CD8-positive, alpha-beta T cell (primary cell): ENCODE measurements at regions of chr12 and their contacts with region 1.

Region 1: GRCh38 chr12:133181238-133181959 is at the start of gene ZNF268:
- DNase-seq: peak; percentile 78 to 93 (median 89)
- ATAC-seq: peak; percentile 92
- H3K4me3 ChIP-seq: peak within 1 kb of the TSS; percentile 73 to 82
- H3K4me3 Mint-ChIP-seq: peak within 1 kb of the TSS; percentile 93
- H3K27ac ChIP-seq: peak within 1 kb of the TSS; percentile 76 to 79
- H3K27ac Mint-ChIP-seq: peak within 1 kb of the TSS; percentile 92
- H3K4me1 ChIP-seq: peaks cover 8% of the 10 kb centered on the region
- H3K4me1 Mint-ChIP-seq: peaks cover 19% of the 10 kb centered on the region
- H3K27me3 ChIP-seq: no peaks in the 10 kb centered on the region
- H3K27me3 Mint-ChIP-seq: no peaks in the 10 kb centered on the region
- CTCF ChIP-seq: peak; percentile 35
- total RNA-seq, gene ZNF268: 23.9 to 24.8 TPM

Region 2: DNA sequence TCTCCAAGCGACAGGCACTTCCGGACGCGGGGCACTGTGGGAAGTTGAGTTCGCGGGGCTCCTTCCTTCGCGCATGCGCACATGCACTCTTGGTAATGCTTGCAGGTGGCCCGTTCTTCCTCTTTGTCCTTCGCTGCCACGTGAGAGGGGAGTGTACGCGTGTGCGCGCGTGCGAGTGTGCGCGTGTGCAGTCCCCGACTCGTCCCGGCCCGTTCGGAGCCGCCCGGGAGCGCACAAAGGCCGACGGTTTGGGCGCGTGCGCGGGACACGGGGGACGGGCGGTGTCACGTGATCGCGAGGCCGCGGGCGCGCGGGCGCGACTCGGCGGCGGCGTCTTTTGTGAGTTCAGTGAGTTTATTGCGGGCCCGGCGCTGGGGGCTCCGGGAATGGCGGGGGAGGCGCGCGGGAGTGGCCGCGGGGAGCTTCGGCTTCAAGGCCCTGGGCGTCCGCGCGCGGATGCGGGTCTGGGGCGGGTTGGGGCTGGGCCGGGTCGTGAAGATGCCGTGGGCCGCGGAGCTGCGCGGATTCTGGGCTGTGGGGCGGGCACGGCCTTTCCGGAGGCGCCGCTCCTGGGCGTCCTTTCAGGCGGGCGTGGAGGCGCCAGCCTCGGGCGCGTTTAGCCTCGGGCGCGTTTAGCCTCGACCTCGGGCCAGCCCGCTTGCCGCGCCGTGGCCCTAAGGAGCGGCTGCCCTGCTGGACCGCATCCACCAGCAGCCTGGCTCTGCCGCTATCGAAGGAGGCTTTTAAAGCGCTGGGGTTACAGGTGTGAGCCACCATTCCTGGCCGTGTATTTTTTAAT is 144.0 kb before region 1 on chr12 and contains the start of gene ZNF84:
- CTCF ChIA-PET with region 1: interaction called, 3 read pairs
- POLR2A ChIA-PET with region 1: interaction called, 6 read pairs
- intact Hi-C with region 1: loop called (anchors 1 kb)
- DNase-seq: peak; percentile 94 to 99 (median 96)
- ATAC-seq: peak; percentile 97
- H3K4me3 ChIP-seq: peak within 1 kb of the TSS; percentile 62 to 69
- H3K4me3 Mint-ChIP-seq: peak within 1 kb of the TSS; percentile 93
- H3K27ac ChIP-seq: peak within 1 kb of the TSS; percentile 78 to 89
- H3K27ac Mint-ChIP-seq: peak within 1 kb of the TSS; percentile 92
- H3K4me1 ChIP-seq: peaks cover 4% of the 10 kb centered on the region
- H3K4me1 Mint-ChIP-seq: peaks cover 20% of the 10 kb centered on the region
- H3K27me3 ChIP-seq: no peaks in the 10 kb centered on the region
- H3K27me3 Mint-ChIP-seq: no peaks in the 10 kb centered on the region
- CTCF ChIP-seq: no peak
- total RNA-seq, gene ZNF84: 26.8 to 27.2 TPM

Region 3: GRCh38 chr12:133080368-133081158 is 100.8 kb before region 1 on chr12 and contains the start of gene ZNF140:
- CTCF ChIA-PET with region 1: interaction called, 3 read pairs
- POLR2A ChIA-PET with region 1: interaction called, 9 read pairs
- intact Hi-C with region 1: loop called (anchors 1 kb)
- DNase-seq: peak; percentile 87 to 98 (median 94)
- ATAC-seq: peak; percentile 57
- H3K4me3 ChIP-seq: peak within 1 kb of the TSS; percentile 87 to 92
- H3K4me3 Mint-ChIP-seq: no peak within 1 kb of the TSS
- H3K27ac ChIP-seq: peak within 1 kb of the TSS; percentile 98 to 99
- H3K27ac Mint-ChIP-seq: no peak within 1 kb of the TSS
- H3K4me1 ChIP-seq: peaks cover 15% of the 10 kb centered on the region
- H3K4me1 Mint-ChIP-seq: peaks cover 17% of the 10 kb centered on the region
- H3K27me3 ChIP-seq: no peaks in the 10 kb centered on the region
- H3K27me3 Mint-ChIP-seq: no peaks in the 10 kb centered on the region
- CTCF ChIP-seq: peak; percentile 33
- total RNA-seq, gene ZNF140: 9.1 to 9.4 TPM